ENCODE measurements at regions of chr4 and their contacts with region 1.

Region 1: GRCh38 chr4:159497936-159498335 is 395.1 kb downstream of the RAPGEF2 start:
- DNase-seq: no peak
- H3K4me3 ChIP-seq: no peak overlapping the region
- H3K27ac ChIP-seq: no peak overlapping the region
- H3K4me1 ChIP-seq: no peaks in the 10 kb centered on the region
- H3K27me3 ChIP-seq: no peaks in the 10 kb centered on the region
- CTCF ChIP-seq: no peak
- EP300 ChIP-seq: no peak
- POLR2A ChIP-seq: no peak

Region 2: GRCh38 chr4:157763490-157763889 is 1734.4 kb before region 1 on chr4:
- in situ Hi-C with region 1: no loop called
- intact Hi-C with region 1: no loop called
- DNase-seq: no peak
- H3K4me3 ChIP-seq: no peak overlapping the region
- H3K27ac ChIP-seq: no peak overlapping the region
- H3K4me1 ChIP-seq: peaks cover 0 to 8% (median 0%) of the 10 kb centered on the region in 4 donors
- H3K27me3 ChIP-seq: no peaks in the 10 kb centered on the region
- CTCF ChIP-seq: no peak
- EP300 ChIP-seq: no peak
- POLR2A ChIP-seq: no peak

Region 3: DNA sequence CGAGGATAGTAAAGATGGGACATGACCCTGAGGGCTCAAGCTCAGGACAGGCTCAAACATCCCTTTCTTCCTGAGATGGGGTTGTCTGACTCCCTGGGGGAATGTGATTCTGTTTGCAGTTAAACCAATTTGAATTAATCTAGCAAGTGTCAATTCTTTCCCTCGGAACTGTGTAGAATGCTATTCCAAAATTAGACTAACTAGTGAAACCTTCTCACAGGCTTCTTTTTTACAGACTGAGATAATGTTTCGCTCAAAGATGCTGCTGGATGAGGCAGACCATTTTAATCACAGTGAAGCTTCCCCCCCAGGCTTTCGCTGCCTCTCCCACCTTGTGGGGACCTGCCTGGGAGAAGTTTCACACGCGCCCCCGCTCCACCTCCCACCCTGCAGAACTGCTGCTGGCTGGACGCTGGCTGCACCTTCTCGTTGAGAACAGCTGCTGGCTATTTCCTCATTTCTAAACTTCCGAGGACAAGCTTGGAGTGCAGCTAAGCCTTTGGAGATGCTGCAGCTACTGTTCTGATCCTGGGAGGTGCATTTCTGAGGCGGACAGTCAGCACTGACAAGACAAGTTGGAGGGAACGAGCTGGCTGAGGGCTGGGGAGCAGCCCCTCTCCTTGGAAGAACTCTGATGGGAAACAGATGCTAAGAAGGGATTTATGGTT is 97.2 kb before region 1 on chr4:
- in situ Hi-C with region 1: no loop called
- intact Hi-C with region 1: no loop called
- DNase-seq: no peak
- H3K4me3 ChIP-seq: no peak overlapping the region
- H3K27ac ChIP-seq: no peak overlapping the region
- H3K4me1 ChIP-seq: peaks cover 0 to 3% (median 0%) of the 10 kb centered on the region in 4 donors
- H3K27me3 ChIP-seq: no peaks in the 10 kb centered on the region
- CTCF ChIP-seq: no peak
- EP300 ChIP-seq: no peak
- POLR2A ChIP-seq: no peak

Region 4: GRCh38 chr4:159428975-159429692 is 68.8 kb before region 1 on chr4:
- in situ Hi-C with region 1: no loop called
- intact Hi-C with region 1: loop called (anchors 2 kb)
- DNase-seq: no peak
- H3K4me3 ChIP-seq: no peak overlapping the region
- H3K27ac ChIP-seq: no peak overlapping the region
- H3K4me1 ChIP-seq: no peaks in the 10 kb centered on the region
- H3K27me3 ChIP-seq: no peaks in the 10 kb centered on the region
- CTCF ChIP-seq: no peak
- EP300 ChIP-seq: no peak
- POLR2A ChIP-seq: no peak

Measured in transverse colon (tissue), 4 donors.